Esophagus squamous epithelium (tissue), 5 donors: ENCODE measurements at regions of chr6 and their contacts with region 1.

Region 1: GRCh38 chr6:41167173-41167963 is 4.5 kb upstream of the TREM2 start:
- DNase-seq: no peak
- H3K4me3 ChIP-seq: no peak overlapping the region
- H3K27ac ChIP-seq: no peak overlapping the region
- H3K4me1 ChIP-seq: no peaks in the 10 kb centered on the region
- H3K27me3 ChIP-seq: peaks cover 0 to 25% (median 0%) of the 10 kb centered on the region in 4 donors
- CTCF ChIP-seq: no peak
- POLR2A ChIP-seq: no peak

Region 2: DNA sequence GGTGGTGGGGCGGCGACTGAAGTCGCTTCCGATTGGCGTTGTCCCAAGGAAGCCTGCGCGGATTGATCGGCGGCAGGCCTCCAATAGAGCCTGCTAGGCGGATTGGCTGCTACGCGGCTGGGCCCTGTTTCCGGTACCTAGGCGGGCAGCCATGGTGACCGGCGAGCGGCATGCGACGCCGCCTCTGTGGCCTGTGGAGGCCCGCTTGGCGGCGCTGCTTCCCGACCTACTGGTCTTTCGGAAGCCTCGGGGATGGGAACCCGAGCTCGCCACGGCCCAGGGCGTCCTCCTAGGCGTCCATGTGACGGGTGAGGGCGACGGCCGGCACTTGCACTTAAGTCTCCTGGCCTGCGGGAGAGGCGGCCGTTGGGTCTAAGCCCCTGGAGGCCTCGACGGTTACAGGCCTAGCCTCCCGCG is 66.5 kb before region 1 on chr6:
- intact Hi-C with region 1: loop called (anchors 10 kb)
- DNase-seq: no peak
- H3K4me3 ChIP-seq: no peak overlapping the region
- H3K27ac ChIP-seq: no peak overlapping the region
- H3K4me1 ChIP-seq: no peaks in the 10 kb centered on the region
- H3K27me3 ChIP-seq: no peaks in the 10 kb centered on the region
- CTCF ChIP-seq: no peak
- POLR2A ChIP-seq: no peak